Activated CD8-positive, alpha-beta memory T cell treated with anti-CD3 and anti-CD28 coated beads, Interleukin-2, amount 10 ng/mL, durations not matched to agents 7 days and 5 days (primary cell): ENCODE measurements at regions of chr4 and their contacts with region 1.

Region 1: DNA sequence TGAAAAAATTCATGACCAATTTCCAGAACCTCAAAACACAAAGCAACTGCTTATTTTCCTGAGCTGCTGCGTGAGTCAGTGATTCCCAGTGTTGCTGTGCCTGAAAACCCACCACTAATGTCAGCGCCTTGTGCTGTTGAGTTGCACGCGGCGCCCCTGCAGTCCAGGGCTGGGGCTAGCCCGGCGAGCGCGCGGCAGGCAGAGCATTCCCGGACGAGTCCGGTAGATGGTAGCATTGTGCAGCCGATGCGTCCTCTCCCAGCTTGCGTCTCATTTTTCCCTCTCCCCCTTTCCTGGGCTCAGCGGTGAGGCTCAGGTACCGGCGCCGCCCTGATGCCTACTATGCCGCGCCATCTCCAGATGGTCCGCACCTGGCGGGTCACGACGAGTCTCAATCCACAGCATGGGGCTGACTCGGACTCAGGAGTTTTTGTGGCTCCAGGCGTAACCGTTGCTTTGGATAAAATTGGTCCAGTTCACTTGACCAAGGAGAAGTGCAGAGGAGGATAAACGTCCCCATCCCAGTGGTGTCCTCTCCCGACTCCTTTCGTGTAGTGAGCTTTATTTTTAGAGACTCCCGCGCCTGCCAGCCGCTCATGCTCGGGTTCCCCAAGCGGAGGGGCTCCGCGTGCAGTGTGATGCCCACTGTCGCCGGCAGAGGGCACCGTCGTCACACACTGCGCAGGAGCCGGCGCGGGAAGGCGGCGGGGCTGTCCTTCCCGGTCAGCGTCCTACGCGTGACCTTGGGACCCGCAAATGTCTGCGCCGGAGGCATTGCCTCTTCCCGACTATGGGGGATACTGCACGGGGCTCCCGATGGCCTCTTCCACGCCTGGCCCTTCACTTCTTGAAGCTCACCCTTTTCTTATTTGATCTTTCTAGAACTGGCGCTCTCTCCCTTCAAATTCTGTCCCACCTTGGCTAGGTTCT is 53.6 kb upstream of the IGFBP7 start:
- DNase-seq: peak; percentile 77
- ATAC-seq: peak; percentile 97
- H3K4me3 Mint-ChIP-seq: peak overlapping the region; percentile 75
- H3K27ac Mint-ChIP-seq: peak overlapping the region; percentile 54
- H3K4me1 Mint-ChIP-seq: peaks cover 14% of the 10 kb centered on the region
- H3K27me3 Mint-ChIP-seq: peaks cover 25% of the 10 kb centered on the region

Region 2: GRCh38 chr4:57148831-57149505 is 14.8 kb before region 1 on chr4:
- CTCF ChIA-PET with region 1: interaction called, 12 read pairs
- DNase-seq: no peak
- ATAC-seq: no peak
- H3K4me3 Mint-ChIP-seq: no peak overlapping the region
- H3K27ac Mint-ChIP-seq: no peak overlapping the region
- H3K4me1 Mint-ChIP-seq: no peaks in the 10 kb centered on the region
- H3K27me3 Mint-ChIP-seq: peaks cover 12% of the 10 kb centered on the region

Region 3: DNA sequence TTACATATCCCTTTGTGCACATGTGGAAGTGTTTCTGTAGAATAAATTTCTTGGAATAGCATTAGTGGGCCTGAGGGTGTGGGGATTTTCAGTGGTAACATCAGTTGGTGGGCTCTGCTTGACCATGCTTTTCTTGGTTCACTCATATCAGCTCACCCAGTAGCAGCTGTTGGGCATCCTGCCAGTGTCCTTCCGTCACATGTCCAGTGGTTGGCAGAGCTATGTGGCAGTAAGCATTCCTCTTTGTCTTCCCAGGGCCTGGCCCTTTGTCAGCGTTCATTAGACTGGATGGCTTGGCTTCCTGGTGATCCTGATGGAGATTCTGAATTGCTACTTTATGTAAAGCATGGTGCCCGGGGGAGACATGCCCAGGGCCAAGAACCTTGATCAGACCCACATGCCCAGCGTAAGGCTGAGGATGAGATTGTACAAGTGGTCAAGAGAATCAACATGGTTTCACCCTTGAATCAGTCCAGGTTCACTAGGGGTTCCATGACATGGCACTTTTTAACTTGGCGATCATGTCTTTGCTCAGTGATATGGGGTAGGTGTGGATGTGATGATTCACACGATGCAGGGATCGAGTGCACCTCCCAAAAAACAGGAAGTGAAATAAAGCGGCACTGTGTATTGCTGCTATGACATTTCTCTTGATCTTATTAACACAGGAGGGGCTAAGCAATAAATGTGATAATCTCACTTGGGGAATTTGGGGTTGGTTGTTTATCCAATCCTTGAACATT is 18.5 kb after region 1 on chr4:
- CTCF ChIA-PET with region 1: interaction called, 14 read pairs
- DNase-seq: no peak
- ATAC-seq: no peak
- H3K4me3 Mint-ChIP-seq: no peak overlapping the region
- H3K27ac Mint-ChIP-seq: no peak overlapping the region
- H3K4me1 Mint-ChIP-seq: no peaks in the 10 kb centered on the region
- H3K27me3 Mint-ChIP-seq: no peaks in the 10 kb centered on the region

Region 4: GRCh38 chr4:57190601-57191481 is 27.0 kb after region 1 on chr4:
- CTCF ChIA-PET with region 1: interaction called, 16 read pairs
- DNase-seq: no peak
- ATAC-seq: no peak
- H3K4me3 Mint-ChIP-seq: no peak overlapping the region
- H3K27ac Mint-ChIP-seq: no peak overlapping the region
- H3K4me1 Mint-ChIP-seq: no peaks in the 10 kb centered on the region
- H3K27me3 Mint-ChIP-seq: peaks cover 22% of the 10 kb centered on the region